ENCODE measurements at regions of chr5 and their contacts with region 1.

Region 1: GRCh38 chr5:95672486-95673469 is 10.0 kb downstream of the SPATA9 start:
- DNase-seq: no peak
- ATAC-seq: no peak

Region 2: GRCh38 chr5:95583992-95584391 is 88.8 kb before region 1 on chr5:
- intact Hi-C with region 1: no loop called
- DNase-seq: no peak
- ATAC-seq: no peak

Region 3: DNA sequence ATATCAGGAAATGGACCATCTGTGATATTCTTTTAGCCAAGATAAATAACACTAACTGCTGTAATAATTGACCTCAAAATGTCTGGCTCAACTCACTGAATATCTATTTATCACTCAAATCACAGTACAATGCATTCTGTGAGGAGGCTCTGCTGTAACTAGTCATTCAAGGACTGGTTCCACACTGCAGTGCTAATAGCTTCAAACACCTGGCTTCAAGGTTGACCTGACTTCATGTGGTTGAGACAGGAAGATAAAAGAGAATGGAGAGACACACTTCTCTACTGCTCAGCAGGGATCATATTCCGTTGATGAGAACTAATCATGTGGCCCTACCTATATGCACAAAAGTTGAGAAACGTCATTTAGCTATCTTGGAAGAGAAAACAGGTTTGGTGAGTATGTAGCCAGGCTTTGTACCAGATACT is 55.0 kb after region 1 on chr5:
- intact Hi-C with region 1: loop called in 1 of 2 experiments (anchors 5 kb)
- DNase-seq: no peak
- ATAC-seq: peak; percentile 35